HCT116 (cell line): ENCODE measurements at regions of chr1 and their contacts with region 1.

Region 1: GRCh38 chr1:84122780-84123382 is 21.2 kb upstream of the PRKACB start:
- DNase-seq: no peak
- ATAC-seq: peak; percentile 80
- H3K4me3 ChIP-seq: no peak overlapping the region
- H3K27ac ChIP-seq: no peak overlapping the region
- H3K4me1 ChIP-seq: peaks cover 0 to 3% of the 10 kb centered on the region in 2 experiments; a peak in 1 of 4 replicates
- H3K27me3 ChIP-seq: no peaks in the 10 kb centered on the region
- CTCF ChIP-seq: peak; percentile 61 to 82 (median 78)
- POLR2A ChIP-seq: no peak
- RAD21 ChIP-seq: peak; percentile 87

Region 2: DNA sequence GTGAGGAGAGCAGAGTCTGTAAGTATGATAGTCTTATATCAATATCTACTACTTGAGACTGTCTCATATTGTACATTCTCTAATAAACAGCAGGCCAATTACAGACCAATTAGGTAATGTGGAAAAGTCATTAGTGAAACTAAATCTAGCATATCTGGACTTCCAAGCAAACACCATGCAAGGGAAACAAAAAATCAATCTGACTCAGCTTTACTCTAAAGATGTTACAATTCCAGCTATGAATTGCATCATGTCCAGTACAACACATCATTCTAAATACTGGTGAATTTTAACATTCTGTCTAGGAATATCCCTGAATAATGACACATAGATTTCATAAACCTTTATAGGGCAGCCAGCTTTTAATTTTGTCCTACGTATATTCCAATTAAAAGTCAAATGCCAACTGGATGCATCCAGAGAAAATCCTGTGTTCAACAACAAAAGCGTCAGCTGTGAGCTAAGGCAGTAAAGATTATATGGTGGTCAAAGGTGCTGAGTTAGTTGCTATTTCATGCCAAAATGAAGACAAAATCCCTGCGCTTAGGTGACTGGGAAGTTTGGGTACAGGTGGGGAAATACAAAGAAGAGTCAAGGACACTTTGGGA is 283.2 kb before region 1 on chr1:
- CTCF ChIA-PET with region 1: no interaction called
- POLR2A ChIA-PET with region 1: no interaction called
- RAD21 ChIA-PET with region 1: no interaction called
- intact Hi-C with region 1: no loop called
- DNase-seq: no peak
- ATAC-seq: no peak
- H3K4me3 ChIP-seq: no peak overlapping the region
- H3K27ac ChIP-seq: no peak overlapping the region
- H3K4me1 ChIP-seq: no peaks in the 10 kb centered on the region
- H3K27me3 ChIP-seq: no peaks in the 10 kb centered on the region; the same call in 1 of the 2 replicates
- CTCF ChIP-seq: no peak
- POLR2A ChIP-seq: no peak
- RAD21 ChIP-seq: no peak

Region 3: DNA sequence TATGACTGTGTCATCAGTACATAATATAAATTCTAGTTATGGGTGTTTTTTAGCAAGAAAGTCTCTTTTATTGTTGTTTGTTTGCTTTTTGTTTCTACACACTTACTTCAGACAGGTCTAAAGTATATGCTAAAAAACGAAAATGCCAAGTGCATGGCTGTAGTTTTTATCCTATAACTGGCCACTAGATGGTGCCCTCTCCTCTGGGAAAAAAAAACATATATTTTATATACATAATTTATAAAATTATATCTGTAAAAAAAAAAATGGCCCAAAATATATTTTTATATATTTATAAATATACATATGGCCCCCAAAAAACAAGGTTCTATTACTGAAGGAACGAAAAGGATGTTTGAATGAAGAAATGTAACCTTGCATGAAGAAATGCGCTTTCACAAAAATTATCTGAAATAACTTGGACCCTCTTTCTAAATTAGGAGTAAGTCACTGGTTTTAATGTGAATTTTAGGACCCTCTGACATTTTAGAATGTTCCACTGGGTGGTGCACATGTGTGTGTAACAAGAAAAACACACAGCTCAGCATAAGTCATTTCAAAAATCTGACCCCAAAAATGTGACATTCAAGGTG is 217.5 kb before region 1 on chr1:
- CTCF ChIA-PET with region 1: interaction called, 3 read pairs
- POLR2A ChIA-PET with region 1: no interaction called
- RAD21 ChIA-PET with region 1: no interaction called
- intact Hi-C with region 1: loop called (anchors 1 kb)
- DNase-seq: no peak
- ATAC-seq: no peak
- H3K4me3 ChIP-seq: no peak overlapping the region
- H3K27ac ChIP-seq: no peak overlapping the region
- H3K4me1 ChIP-seq: peaks cover 0 to 12% of the 10 kb centered on the region in 2 experiments; a peak in 2 of 4 replicates
- H3K27me3 ChIP-seq: no peaks in the 10 kb centered on the region
- CTCF ChIP-seq: peak; percentile 37 to 52 (median 42); a peak in 4 of 6 replicates
- POLR2A ChIP-seq: no peak
- RAD21 ChIP-seq: peak; percentile 48

Region 4: GRCh38 chr1:83931658-83932253 is 191.1 kb before region 1 on chr1:
- CTCF ChIA-PET with region 1: interaction called, 23 read pairs
- POLR2A ChIA-PET with region 1: no interaction called
- RAD21 ChIA-PET with region 1: interaction called, 3 to 6 read pairs
- intact Hi-C with region 1: loop called (anchors 1 kb)
- DNase-seq: peak; percentile 39
- ATAC-seq: peak; percentile 88
- H3K4me3 ChIP-seq: no peak overlapping the region
- H3K27ac ChIP-seq: no peak overlapping the region
- H3K4me1 ChIP-seq: peaks cover 0 to 4% of the 10 kb centered on the region in 2 experiments; a peak in 1 of 4 replicates
- H3K27me3 ChIP-seq: no peaks in the 10 kb centered on the region
- CTCF ChIP-seq: peak; percentile 68 to 82 (median 81); a peak in 5 of 6 replicates
- POLR2A ChIP-seq: no peak
- RAD21 ChIP-seq: peak; percentile 88

Region 5: GRCh38 chr1:84758968-84759491 is 636.1 kb after region 1 on chr1:
- CTCF ChIA-PET with region 1: no interaction called
- POLR2A ChIA-PET with region 1: no interaction called
- RAD21 ChIA-PET with region 1: no interaction called
- intact Hi-C with region 1: loop called (anchors 5 kb)
- DNase-seq: no peak
- ATAC-seq: no peak
- H3K4me3 ChIP-seq: no peak overlapping the region
- H3K27ac ChIP-seq: no peak overlapping the region
- H3K4me1 ChIP-seq: no peaks in the 10 kb centered on the region
- H3K27me3 ChIP-seq: no peaks in the 10 kb centered on the region
- CTCF ChIP-seq: no peak
- POLR2A ChIP-seq: no peak
- RAD21 ChIP-seq: no peak